ENCODE measurements at regions of chr1 and their contacts with region 1.

Region 1: DNA sequence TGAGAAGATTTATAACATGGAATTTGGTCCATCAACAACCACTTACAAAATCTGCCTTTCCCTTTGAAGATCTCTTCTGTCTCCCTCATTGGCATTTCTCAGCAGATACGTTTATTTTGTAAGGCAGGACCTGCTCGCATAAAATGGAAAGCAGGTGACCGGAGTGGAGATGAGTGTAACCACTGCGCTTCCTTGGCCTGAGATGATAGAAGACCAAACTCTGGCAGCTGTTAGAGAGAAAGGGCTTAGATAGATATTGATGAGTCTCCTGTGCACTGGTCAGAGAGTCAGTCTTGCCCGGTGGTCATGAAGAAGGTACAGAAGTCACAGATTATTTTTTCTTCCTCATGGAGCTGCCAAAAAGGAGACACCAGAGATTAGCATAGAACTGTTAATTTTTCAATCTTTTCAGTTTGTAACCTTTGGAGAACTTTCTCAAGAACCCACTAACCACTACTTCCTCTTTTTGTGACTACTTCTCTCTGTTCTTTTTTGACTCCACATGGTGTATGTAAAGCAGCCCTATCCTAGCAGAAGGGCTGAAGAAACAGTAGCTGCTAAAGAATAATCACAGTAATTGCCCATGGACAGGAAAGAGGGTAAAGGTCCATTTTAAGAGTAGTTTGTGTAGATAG is 47.6 kb downstream of the FCRL3 start:
- DNase-seq: peak; percentile 93
- H3K4me3 ChIP-seq: peak overlapping the region; percentile 47
- H3K27ac ChIP-seq: peak overlapping the region; percentile 90
- H3K4me1 ChIP-seq: peaks cover 83% of the 10 kb centered on the region
- CTCF ChIP-seq: no peak

Region 2: DNA sequence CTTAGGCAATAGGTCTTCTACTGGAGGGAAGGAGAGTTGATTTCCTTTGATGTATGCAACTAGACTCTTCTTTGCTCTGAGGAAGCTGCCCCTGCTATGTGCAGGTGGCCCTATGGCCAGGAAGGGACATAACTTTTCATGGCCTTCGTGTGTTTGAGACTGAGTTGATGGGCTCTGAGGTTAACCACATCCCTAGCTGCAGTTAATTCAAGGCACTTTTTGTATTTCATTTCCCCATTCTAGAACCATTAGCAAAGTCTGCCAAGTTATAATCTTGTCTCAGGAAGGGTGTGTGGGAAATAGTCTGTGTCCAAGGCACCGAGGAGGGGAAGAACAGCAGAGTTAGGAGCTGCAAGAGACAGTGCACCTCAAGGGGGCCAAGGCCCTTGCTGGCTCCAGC is 57.6 kb before region 1 on chr1:
- CTCF ChIA-PET with region 1: no interaction called
- POLR2A ChIA-PET with region 1: no interaction called
- intact Hi-C with region 1: loop called (anchors 2 kb)
- DNase-seq: peak; percentile 94
- H3K4me3 ChIP-seq: peak overlapping the region; percentile 22
- H3K27ac ChIP-seq: peak overlapping the region; percentile 42
- H3K4me1 ChIP-seq: peaks cover 60% of the 10 kb centered on the region
- CTCF ChIP-seq: no peak; the same call in 1 of the 2 replicates

Region 3: GRCh38 chr1:157751283-157751682 is 98.3 kb after region 1 on chr1:
- CTCF ChIA-PET with region 1: no interaction called
- POLR2A ChIA-PET with region 1: no interaction called
- intact Hi-C with region 1: loop called (anchors 10 kb)
- DNase-seq: no peak
- H3K4me3 ChIP-seq: no peak overlapping the region
- H3K27ac ChIP-seq: no peak overlapping the region
- H3K4me1 ChIP-seq: peaks cover 4% of the 10 kb centered on the region
- CTCF ChIP-seq: peak; percentile 47